ENCODE measurements at regions of chr17 and their contacts with region 1.

Region 1: DNA sequence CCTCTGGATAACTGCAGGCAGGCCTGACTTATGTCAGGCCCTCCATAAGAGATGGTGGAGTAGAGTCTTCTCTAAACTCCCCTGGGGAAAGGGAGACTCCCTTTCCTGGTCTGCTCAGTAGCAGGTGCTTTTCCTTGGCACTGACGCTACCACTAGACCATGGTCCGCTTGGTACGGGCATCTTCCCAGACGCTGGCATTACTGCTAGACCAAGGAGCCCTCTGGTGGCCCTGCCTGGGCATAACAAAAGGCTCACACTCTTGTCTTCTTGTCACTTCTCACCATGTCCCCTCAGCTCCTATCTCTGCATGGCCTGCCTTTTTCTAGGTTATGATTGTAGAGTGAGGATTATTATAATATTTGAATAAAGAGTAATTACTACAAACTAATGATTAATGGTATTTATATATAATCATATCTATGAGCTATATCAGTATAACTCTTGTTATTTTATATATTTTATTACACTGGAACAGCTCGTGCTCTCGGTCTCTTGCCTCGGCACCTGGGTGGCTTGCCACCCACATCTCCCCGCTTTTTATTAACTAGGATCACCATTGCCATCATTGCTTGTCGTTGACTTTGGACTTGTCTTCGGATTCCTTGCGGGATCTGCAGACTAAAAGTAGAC is 59.8 kb upstream of the ARL4D start:
- DNase-seq: peak; percentile 46
- H3K4me3 Mint-ChIP-seq: no peak overlapping the region
- H3K27ac Mint-ChIP-seq: no peak overlapping the region
- H3K4me1 Mint-ChIP-seq: peaks cover 35% of the 10 kb centered on the region
- H3K27me3 Mint-ChIP-seq: no peaks in the 10 kb centered on the region

Region 2: GRCh38 chr17:43183921-43184320 is 155.1 kb before region 1 on chr17:
- intact Hi-C with region 1: no loop called
- DNase-seq: no peak
- H3K4me3 Mint-ChIP-seq: no peak overlapping the region
- H3K27ac Mint-ChIP-seq: no peak overlapping the region
- H3K4me1 Mint-ChIP-seq: no peaks in the 10 kb centered on the region
- H3K27me3 Mint-ChIP-seq: no peaks in the 10 kb centered on the region

Region 3: GRCh38 chr17:43351691-43352090 is 12.7 kb after region 1 on chr17:
- intact Hi-C with region 1: loop called (anchors 1 kb)
- DNase-seq: no peak
- H3K4me3 Mint-ChIP-seq: peak overlapping the region; percentile 36
- H3K27ac Mint-ChIP-seq: peak overlapping the region; percentile 97
- H3K4me1 Mint-ChIP-seq: peaks cover 27% of the 10 kb centered on the region
- H3K27me3 Mint-ChIP-seq: no peaks in the 10 kb centered on the region

Region 4: DNA sequence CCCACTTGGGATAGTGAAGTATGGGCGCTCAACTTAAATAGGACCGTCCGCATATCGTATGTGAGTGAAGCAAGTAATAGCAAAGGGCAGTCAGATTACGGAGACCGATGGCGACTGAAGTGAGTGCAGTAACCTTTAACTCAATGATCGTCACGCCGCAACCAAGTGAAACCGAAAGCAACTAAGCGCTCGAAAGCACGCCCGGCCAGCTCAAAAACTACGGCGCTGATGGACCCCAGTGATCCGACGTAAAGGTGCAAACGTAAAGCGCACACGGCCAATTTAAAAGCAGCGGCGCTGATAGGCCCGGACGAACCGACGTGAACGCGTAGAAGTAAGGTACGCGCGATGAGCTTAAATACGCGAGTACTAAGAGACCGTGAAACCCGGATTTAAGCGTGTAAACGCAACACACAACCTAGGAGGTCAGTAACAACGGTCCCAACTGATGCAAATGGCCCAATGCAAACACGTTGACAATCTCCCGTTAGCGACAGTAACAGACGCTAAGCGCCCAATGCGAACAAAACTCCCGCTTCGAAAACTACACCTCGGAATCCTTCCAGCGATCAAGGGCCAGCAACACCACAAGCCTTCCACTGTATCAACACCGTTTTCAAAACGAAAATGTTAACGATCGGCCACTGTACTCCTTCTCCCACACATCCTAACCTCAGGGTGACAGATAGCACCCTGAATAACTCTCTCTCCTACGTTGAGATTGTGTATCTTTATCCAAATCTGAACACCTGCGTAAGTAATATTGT is 21.9 kb after region 1 on chr17:
- intact Hi-C with region 1: loop called (anchors 1 kb)
- DNase-seq: peak; percentile 94
- H3K4me3 Mint-ChIP-seq: peak overlapping the region; percentile 85
- H3K27ac Mint-ChIP-seq: peak overlapping the region; percentile 100
- H3K4me1 Mint-ChIP-seq: peaks cover 40% of the 10 kb centered on the region
- H3K27me3 Mint-ChIP-seq: no peaks in the 10 kb centered on the region